CD8-positive, alpha-beta memory T cell (primary cell): ENCODE measurements at regions of chr5 and their contacts with region 1.

Region 1: DNA sequence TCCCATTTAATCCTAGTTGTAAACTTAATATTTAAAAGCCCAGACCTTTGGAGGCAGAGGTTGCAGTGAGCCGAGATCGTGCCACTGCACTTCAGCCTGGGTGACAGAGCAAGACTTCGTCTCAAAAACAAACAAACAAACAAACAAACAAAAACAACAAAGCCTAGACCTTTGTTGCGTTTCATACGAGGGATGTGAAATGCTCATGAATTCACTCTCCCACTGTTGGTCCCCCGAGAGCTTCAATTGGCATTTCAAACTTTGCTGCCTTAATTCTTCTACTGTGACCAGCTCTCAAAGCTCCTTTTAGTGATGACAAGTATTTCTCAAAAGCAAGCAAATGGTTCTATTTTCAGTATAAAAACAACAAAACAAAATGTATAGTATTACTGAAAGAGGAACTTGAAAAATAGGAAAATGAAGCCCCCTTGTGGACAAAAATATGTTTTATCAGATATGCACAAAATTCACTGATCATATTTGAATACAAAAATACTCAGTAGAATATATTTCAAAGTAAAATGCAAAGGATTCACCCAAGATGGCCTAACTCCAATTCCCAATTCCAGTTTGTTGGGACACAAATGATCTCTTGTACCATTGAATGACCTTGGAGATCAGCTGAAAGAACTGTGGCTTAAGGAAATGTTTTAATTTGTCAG is 140.4 kb downstream of the ESM1 start:
- DNase-seq: peak in 2 of 5 donors; percentile 38 to 53
- H3K4me3 ChIP-seq: no peak overlapping the region
- H3K4me3 Mint-ChIP-seq: peak overlapping the region in 2 of 7 donors; percentile 21 to 29
- H3K27ac ChIP-seq: no peak overlapping the region
- H3K27ac Mint-ChIP-seq: peak overlapping the region in 2 of 8 donors; percentile 59 to 70
- H3K4me1 ChIP-seq: peaks cover 4% of the 10 kb centered on the region
- H3K4me1 Mint-ChIP-seq: peaks cover 2 to 9% (median 4%) of the 10 kb centered on the region in 3 donors
- H3K27me3 ChIP-seq: no peaks in the 10 kb centered on the region
- H3K27me3 Mint-ChIP-seq: peaks cover 13 to 17% of the 10 kb centered on the region in 2 donors

Region 2: GRCh38 chr5:54524704-54525103 is 320.3 kb before region 1 on chr5:
- CTCF ChIA-PET with region 1: interaction called, 111 read pairs
- POLR2A ChIA-PET with region 1: interaction called, 4 read pairs
- DNase-seq: no peak
- H3K4me3 ChIP-seq: no peak overlapping the region
- H3K4me3 Mint-ChIP-seq: peak overlapping the region in 3 of 7 donors; percentile 10 to 90 (median 75)
- H3K27ac ChIP-seq: no peak overlapping the region
- H3K27ac Mint-ChIP-seq: no peak overlapping the region
- H3K4me1 ChIP-seq: peaks cover 66% of the 10 kb centered on the region
- H3K4me1 Mint-ChIP-seq: peaks cover 5 to 63% (median 17%) of the 10 kb centered on the region in 3 donors
- H3K27me3 ChIP-seq: no peaks in the 10 kb centered on the region
- H3K27me3 Mint-ChIP-seq: no peaks in the 10 kb centered on the region

Region 3: GRCh38 chr5:54820346-54821134 is 24.5 kb before region 1 on chr5:
- CTCF ChIA-PET with region 1: no interaction called
- POLR2A ChIA-PET with region 1: no interaction called
- DNase-seq: no peak
- H3K4me3 ChIP-seq: no peak overlapping the region
- H3K4me3 Mint-ChIP-seq: no peak overlapping the region
- H3K27ac ChIP-seq: no peak overlapping the region
- H3K27ac Mint-ChIP-seq: peak overlapping the region in 1 of 8 donors; percentile 0
- H3K4me1 ChIP-seq: no peaks in the 10 kb centered on the region
- H3K4me1 Mint-ChIP-seq: no peaks in the 10 kb centered on the region
- H3K27me3 ChIP-seq: no peaks in the 10 kb centered on the region
- H3K27me3 Mint-ChIP-seq: peaks cover 0 to 5% of the 10 kb centered on the region in 2 donors

Region 4: DNA sequence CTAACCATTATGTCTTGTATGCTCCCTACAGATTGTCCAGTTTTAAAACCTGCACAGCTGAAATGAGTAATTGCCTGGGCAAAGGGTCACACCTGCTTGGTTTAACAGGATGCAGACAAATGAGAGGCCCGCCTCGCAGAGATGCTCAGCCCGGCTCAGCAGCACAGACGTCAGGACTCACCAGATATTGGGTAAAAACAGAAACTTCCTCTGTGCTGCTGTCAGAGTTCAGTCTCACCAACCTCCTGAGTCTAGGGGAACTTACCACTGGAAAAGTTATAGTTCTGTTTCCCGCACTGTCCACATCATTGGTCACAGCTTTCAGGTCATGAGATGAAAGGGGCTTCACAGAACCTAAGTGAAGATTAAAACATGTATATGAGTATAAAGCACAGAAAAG is 12.2 kb before region 1 on chr5:
- CTCF ChIA-PET with region 1: interaction called, 12 read pairs
- POLR2A ChIA-PET with region 1: no interaction called
- DNase-seq: no peak
- H3K4me3 ChIP-seq: no peak overlapping the region
- H3K4me3 Mint-ChIP-seq: no peak overlapping the region
- H3K27ac ChIP-seq: no peak overlapping the region
- H3K27ac Mint-ChIP-seq: peak overlapping the region in 4 of 8 donors; percentile 30 to 63 (median 48)
- H3K4me1 ChIP-seq: no peaks in the 10 kb centered on the region
- H3K4me1 Mint-ChIP-seq: peaks cover 16 to 33% (median 18%) of the 10 kb centered on the region in 3 donors
- H3K27me3 ChIP-seq: no peaks in the 10 kb centered on the region
- H3K27me3 Mint-ChIP-seq: peaks cover 0 to 1% of the 10 kb centered on the region in 2 donors

Region 5: DNA sequence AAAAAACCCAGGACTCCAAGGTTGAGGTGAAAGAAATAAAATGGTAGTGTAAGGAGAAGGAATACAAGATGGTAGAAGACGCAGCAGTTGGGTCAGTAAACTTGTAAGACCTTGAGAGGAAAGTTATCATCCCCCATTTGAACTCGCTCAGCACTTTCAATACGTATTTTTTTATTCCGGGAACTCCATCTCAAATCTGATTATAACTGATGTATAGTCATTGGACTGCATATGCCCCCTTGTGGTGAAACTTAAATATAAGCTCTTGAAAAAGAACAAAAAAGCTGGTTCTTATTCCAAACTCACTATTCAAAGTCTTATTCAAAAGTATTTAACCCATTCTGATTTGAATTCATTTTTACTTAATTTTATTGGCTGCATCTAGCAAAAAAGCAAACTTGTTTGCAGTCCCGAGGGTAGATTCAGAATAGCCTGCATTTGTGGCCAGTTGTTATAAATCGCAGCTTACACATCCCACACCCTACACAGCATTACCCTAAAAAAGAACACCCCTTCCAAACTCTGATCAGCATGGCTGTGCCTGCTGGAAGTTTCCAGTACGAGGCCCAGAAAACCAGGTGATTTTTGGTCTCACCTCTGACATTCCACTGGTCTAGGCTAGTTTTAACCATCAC is 22.4 kb after region 1 on chr5:
- CTCF ChIA-PET with region 1: interaction called, 15 read pairs
- POLR2A ChIA-PET with region 1: no interaction called
- DNase-seq: peak in 2 of 5 donors; percentile 51 to 52
- H3K4me3 ChIP-seq: peak overlapping the region; percentile 10
- H3K4me3 Mint-ChIP-seq: peak overlapping the region in 6 of 7 donors; percentile 0 to 69 (median 40)
- H3K27ac ChIP-seq: no peak overlapping the region
- H3K27ac Mint-ChIP-seq: peak overlapping the region in 1 of 8 donors; percentile 4
- H3K4me1 ChIP-seq: peaks cover 6% of the 10 kb centered on the region
- H3K4me1 Mint-ChIP-seq: peaks cover 4 to 9% (median 6%) of the 10 kb centered on the region in 3 donors
- H3K27me3 ChIP-seq: no peaks in the 10 kb centered on the region
- H3K27me3 Mint-ChIP-seq: peaks cover 10 to 22% of the 10 kb centered on the region in 2 donors

Region 6: DNA sequence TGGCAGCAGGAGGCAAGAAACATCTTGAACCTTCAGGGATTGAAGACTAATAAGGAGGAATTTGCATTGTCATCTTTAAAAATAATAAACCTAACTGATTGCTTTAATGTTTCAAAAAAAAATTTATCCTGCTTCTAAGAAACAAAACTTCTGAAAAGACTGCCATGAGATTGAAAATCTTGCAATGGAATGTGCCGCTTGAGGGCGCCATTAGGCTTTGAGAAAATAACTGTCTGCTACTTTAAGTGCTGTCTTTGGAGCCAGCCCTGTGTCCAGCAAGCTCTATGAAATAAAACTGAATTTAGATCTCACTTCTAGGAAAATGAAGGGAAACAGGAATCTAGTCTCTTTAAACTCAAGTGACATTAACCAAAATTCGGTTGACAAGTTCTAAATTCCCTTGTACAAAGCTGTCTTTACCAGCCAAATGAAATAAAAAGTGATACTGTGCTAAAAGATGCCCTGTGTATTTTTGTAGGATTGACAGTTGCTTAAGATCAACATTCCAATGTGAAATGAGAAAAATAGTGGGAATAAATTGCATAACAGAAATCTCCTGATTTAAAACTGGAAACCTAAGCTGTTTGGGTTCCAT is 61.0 kb after region 1 on chr5:
- CTCF ChIA-PET with region 1: no interaction called
- POLR2A ChIA-PET with region 1: no interaction called
- DNase-seq: peak; percentile 40 to 66 (median 50)
- H3K4me3 ChIP-seq: no peak overlapping the region
- H3K4me3 Mint-ChIP-seq: no peak overlapping the region
- H3K27ac ChIP-seq: no peak overlapping the region
- H3K27ac Mint-ChIP-seq: no peak overlapping the region
- H3K4me1 ChIP-seq: peaks cover 9% of the 10 kb centered on the region
- H3K4me1 Mint-ChIP-seq: peaks cover 9 to 12% (median 11%) of the 10 kb centered on the region in 3 donors
- H3K27me3 ChIP-seq: no peaks in the 10 kb centered on the region
- H3K27me3 Mint-ChIP-seq: peaks cover 0 to 4% of the 10 kb centered on the region in 2 donors

Region 7: DNA sequence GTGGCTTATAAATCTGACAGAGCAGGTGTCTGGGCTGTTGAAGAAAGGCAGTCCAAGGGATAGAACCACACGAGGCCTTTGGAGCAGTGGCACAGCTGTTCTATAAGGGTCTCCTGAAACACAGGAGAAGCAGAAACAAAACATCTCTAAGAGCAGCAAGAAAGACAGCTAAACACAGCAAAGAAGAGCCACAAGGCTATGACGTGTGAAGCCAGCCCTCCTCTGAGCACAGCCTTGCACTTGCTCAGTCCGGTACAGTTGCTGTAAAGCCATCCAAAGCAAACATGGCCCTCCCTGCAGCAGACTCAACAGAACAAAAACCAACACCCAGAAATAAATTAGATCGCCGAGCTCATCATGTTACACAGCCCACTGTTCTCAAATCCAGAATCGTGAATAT is 176.4 kb after region 1 on chr5:
- CTCF ChIA-PET with region 1: no interaction called
- POLR2A ChIA-PET with region 1: no interaction called
- DNase-seq: peak in 2 of 5 donors; percentile 14 to 52
- H3K4me3 ChIP-seq: peak overlapping the region; percentile 7
- H3K4me3 Mint-ChIP-seq: peak overlapping the region; percentile 68 to 90 (median 83)
- H3K27ac ChIP-seq: no peak overlapping the region
- H3K27ac Mint-ChIP-seq: peak overlapping the region; percentile 66 to 97 (median 84)
- H3K4me1 ChIP-seq: peaks cover 32% of the 10 kb centered on the region
- H3K4me1 Mint-ChIP-seq: peaks cover 50 to 69% (median 58%) of the 10 kb centered on the region in 3 donors
- H3K27me3 ChIP-seq: no peaks in the 10 kb centered on the region
- H3K27me3 Mint-ChIP-seq: peaks cover 0 to 3% of the 10 kb centered on the region in 2 donors